ENCODE measurements at regions of chr3 and their contacts with region 1.

Region 1: GRCh38 chr3:12440927-12441326 is 43.4 kb upstream of the TSEN2 start:
- DNase-seq: no peak
- H3K4me3 ChIP-seq: no peak overlapping the region
- H3K4me3 Mint-ChIP-seq: no peak overlapping the region
- H3K27ac Mint-ChIP-seq: peak overlapping the region; percentile 50
- H3K4me1 ChIP-seq: peaks cover 30% of the 10 kb centered on the region
- H3K4me1 Mint-ChIP-seq: peaks cover 29% of the 10 kb centered on the region
- H3K27me3 ChIP-seq: no peaks in the 10 kb centered on the region
- H3K27me3 Mint-ChIP-seq: no peaks in the 10 kb centered on the region
- CTCF ChIP-seq: no peak

Region 2: DNA sequence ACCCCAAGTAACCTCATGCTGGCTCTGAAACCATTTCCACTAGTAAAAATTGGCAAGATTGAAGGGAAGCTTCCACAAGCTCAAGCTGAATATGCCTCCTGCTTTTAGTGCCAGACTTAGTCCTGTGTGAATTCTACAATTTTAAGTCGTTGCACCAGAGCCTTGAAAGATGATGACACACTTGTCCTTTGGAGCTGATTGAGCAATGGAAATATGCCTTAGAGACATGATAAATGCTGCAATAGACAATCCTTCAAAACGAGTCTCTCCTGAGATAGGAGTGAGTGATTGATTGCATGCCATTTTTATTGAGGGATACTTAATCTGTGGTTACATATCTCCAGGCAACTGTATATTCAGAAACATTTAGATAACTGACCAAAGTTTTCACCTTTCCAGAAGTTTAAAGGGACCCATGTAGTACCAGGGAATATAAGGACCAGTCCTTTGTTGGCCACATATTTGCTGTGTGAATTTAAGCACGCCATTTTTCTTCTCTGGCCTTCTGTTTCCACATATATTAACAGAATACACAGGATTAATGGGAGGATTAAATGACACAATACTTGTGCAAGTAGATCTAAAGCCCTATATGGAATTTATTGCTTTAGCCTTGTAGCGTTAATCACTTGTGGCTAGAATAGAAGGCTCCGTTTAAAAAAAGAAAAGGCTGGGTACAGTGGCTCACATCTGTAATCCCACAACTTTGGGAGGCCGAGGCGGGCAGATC is 87.0 kb before region 1 on chr3:
- CTCF ChIA-PET with region 1: no interaction called
- POLR2A ChIA-PET with region 1: no interaction called
- intact Hi-C with region 1: loop called (anchors 1 kb)
- DNase-seq: peak; percentile 36 to 70
- H3K4me3 ChIP-seq: no peak overlapping the region
- H3K4me3 Mint-ChIP-seq: no peak overlapping the region
- H3K27ac Mint-ChIP-seq: no peak overlapping the region
- H3K4me1 ChIP-seq: peaks cover 48% of the 10 kb centered on the region
- H3K4me1 Mint-ChIP-seq: peaks cover 20% of the 10 kb centered on the region
- H3K27me3 ChIP-seq: no peaks in the 10 kb centered on the region
- H3K27me3 Mint-ChIP-seq: no peaks in the 10 kb centered on the region
- CTCF ChIP-seq: no peak

Region 3: DNA sequence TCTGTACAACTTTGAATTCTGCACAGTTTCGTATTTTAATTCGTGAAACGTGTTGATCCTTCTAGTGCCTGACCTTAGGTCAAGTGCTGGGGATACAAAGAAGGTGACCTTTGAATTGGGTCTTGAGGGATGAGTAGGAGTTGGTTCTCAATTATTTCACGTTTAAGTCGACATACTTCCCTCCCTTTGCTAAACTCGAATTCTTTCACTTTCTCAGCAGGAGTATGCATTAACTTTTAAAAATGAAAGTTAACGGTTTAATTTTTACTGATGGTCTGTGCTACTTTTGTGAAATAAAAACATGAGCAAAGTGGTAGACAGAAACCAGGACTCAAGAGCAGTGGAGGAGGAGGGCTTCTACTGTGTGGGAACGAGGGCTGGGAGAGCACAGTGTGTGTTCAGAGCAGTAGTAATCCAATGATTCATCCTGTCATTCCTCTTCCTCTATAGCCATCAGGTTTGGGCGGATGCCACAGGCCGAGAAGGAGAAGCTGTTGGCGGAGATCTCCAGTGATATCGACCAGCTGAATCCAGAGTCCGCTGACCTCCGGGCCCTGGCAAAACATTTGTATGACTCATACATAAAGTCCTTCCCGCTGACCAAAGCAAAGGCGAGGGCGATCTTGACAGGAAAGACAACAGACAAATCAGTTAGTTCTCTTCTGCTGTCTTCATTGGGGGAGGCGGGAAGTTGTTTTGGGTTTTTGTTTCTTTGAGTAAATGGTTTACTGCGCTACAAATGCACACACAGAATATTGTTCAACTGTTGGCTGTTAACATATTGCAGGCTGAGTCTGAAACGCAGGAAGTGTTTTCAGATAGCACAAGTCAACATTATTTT is 35.3 kb before region 1 on chr3:
- CTCF ChIA-PET with region 1: no interaction called
- POLR2A ChIA-PET with region 1: no interaction called
- intact Hi-C with region 1: loop called (anchors 1 kb)
- DNase-seq: peak; percentile 84 to 94
- H3K4me3 ChIP-seq: no peak overlapping the region
- H3K4me3 Mint-ChIP-seq: peak overlapping the region; percentile 68
- H3K27ac Mint-ChIP-seq: peak overlapping the region; percentile 46
- H3K4me1 ChIP-seq: peaks cover 57% of the 10 kb centered on the region
- H3K4me1 Mint-ChIP-seq: peaks cover 25% of the 10 kb centered on the region
- H3K27me3 ChIP-seq: no peaks in the 10 kb centered on the region
- H3K27me3 Mint-ChIP-seq: no peaks in the 10 kb centered on the region
- CTCF ChIP-seq: no peak

Region 4: GRCh38 chr3:12465836-12466395 is 25.0 kb after region 1 on chr3:
- CTCF ChIA-PET with region 1: no interaction called
- POLR2A ChIA-PET with region 1: no interaction called
- intact Hi-C with region 1: loop called (anchors 2 kb)
- DNase-seq: no peak
- H3K4me3 ChIP-seq: no peak overlapping the region
- H3K4me3 Mint-ChIP-seq: no peak overlapping the region
- H3K27ac Mint-ChIP-seq: no peak overlapping the region
- H3K4me1 ChIP-seq: peaks cover 20% of the 10 kb centered on the region
- H3K4me1 Mint-ChIP-seq: no peaks in the 10 kb centered on the region
- H3K27me3 ChIP-seq: no peaks in the 10 kb centered on the region
- H3K27me3 Mint-ChIP-seq: no peaks in the 10 kb centered on the region
- CTCF ChIP-seq: no peak

Region 5: GRCh38 chr3:12706504-12707253 is 265.8 kb after region 1 on chr3:
- CTCF ChIA-PET with region 1: no interaction called
- POLR2A ChIA-PET with region 1: no interaction called
- intact Hi-C with region 1: no loop called
- DNase-seq: peak; percentile 74 to 79
- H3K4me3 ChIP-seq: no peak overlapping the region
- H3K4me3 Mint-ChIP-seq: no peak overlapping the region
- H3K27ac Mint-ChIP-seq: no peak overlapping the region
- H3K4me1 ChIP-seq: peaks cover 28% of the 10 kb centered on the region
- H3K4me1 Mint-ChIP-seq: no peaks in the 10 kb centered on the region
- H3K27me3 ChIP-seq: no peaks in the 10 kb centered on the region
- H3K27me3 Mint-ChIP-seq: no peaks in the 10 kb centered on the region
- CTCF ChIP-seq: peak; percentile 53 to 82